Panc1 (cell line): ENCODE measurements at regions of chr11 and their contacts with region 1.

Region 1: DNA sequence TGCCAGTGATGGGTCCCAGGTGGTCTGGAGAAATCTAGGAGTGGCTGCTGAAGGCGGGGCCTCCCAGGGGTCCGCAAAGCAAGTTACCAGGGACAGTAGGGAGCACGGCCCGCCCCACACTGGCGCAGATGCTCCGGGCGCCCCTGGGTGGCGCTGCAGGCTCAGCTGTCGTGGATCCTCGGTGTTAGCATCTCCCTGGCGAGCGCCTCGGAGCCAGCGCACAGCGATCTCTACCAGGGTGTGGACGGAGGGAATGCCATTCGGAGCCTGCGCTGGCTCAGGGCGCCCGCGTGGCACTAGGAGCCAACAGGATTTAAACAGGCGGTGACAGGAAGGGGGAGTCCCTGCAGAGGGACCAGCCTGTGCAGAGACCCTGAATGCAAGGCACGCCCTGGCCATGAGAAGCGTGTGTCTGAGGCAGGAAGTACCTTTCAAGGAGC is 20.2 kb downstream of the FADS3 start:
- DNase-seq: peak; percentile 25
- ATAC-seq: peak; percentile 95
- H3K4me3 ChIP-seq: peak overlapping the region in 1 of 2 experiments; percentile 40; a peak in 2 of 4 replicates
- H3K27ac ChIP-seq: peak overlapping the region; percentile 48; the same call in 1 of the 2 replicates
- H3K4me1 ChIP-seq: peaks cover 13% of the 10 kb centered on the region
- H3K27me3 ChIP-seq: no peaks in the 10 kb centered on the region
- CTCF ChIP-seq: peak; percentile 97

Region 2: DNA sequence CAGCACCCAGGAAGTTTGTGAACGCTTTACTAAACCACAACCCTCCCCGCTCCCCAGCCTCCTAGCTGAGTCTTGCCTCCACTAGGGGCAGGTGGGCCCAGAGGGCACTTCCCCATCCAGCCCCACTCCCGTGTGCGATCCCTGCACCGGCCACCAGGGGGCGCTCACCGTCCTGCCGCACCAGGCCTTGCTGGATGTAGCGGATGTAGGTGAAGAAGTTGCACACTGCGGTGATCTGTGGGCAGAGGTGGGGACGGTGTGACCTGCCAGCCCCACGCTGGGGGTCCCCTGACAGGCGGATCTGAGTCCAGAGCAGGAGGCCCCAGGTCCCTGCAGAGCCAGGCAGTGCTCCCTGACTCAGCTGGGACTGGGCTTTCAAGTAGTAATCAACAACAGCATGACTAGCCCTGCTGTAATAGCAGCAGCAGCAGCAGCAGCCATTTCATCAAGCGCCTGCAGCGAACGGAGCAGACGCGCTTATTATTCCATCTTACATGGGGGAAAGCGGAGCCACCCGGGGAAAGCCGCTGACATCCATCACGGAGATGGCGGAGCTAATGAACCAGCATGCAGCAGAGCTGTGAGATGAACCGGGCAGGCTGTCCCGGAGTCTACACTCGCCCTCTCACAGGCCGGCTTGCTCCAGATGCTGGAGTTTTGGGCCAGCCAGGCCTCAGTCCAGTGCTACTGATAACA is 28.1 kb after region 1 on chr11:
- CTCF ChIA-PET with region 1: interaction called, 13 read pairs
- POLR2A ChIA-PET with region 1: interaction called, 3 read pairs
- in situ Hi-C with region 1: no loop called
- intact Hi-C with region 1: no loop called
- DNase-seq: peak; percentile 41
- ATAC-seq: peak; percentile 86
- H3K4me3 ChIP-seq: no peak overlapping the region
- H3K27ac ChIP-seq: no peak overlapping the region
- H3K4me1 ChIP-seq: no peaks in the 10 kb centered on the region
- H3K27me3 ChIP-seq: no peaks in the 10 kb centered on the region
- CTCF ChIP-seq: peak; percentile 99